Activated B cell treated with CpG ODN at 0.5 μM for 24 hours (primary cell): ENCODE measurements at regions of chr11 and their contacts with region 1.

Region 1: GRCh38 chr11:128323381-128323780 is 264.0 kb downstream of the ETS1 start:
- DNase-seq: no peak
- ATAC-seq: peak; percentile 25
- H3K4me3 Mint-ChIP-seq: no peak overlapping the region
- H3K27ac Mint-ChIP-seq: peak overlapping the region; percentile 59
- H3K4me1 Mint-ChIP-seq: peaks cover 49% of the 10 kb centered on the region
- H3K27me3 Mint-ChIP-seq: no peaks in the 10 kb centered on the region
- CTCF ChIP-seq: no peak

Region 2: GRCh38 chr11:128207861-128208321 is 115.5 kb before region 1 on chr11:
- CTCF ChIA-PET with region 1: no interaction called
- POLR2A ChIA-PET with region 1: no interaction called
- intact Hi-C with region 1: no loop called
- DNase-seq: no peak
- ATAC-seq: no peak
- H3K4me3 Mint-ChIP-seq: no peak overlapping the region
- H3K27ac Mint-ChIP-seq: no peak overlapping the region
- H3K4me1 Mint-ChIP-seq: no peaks in the 10 kb centered on the region
- H3K27me3 Mint-ChIP-seq: no peaks in the 10 kb centered on the region
- CTCF ChIP-seq: no peak

Region 3: GRCh38 chr11:128302425-128303186 is 20.8 kb before region 1 on chr11:
- CTCF ChIA-PET with region 1: interaction called, 4 read pairs
- POLR2A ChIA-PET with region 1: interaction called, 10 read pairs
- intact Hi-C with region 1: loop called (anchors 1 kb)
- DNase-seq: no peak
- ATAC-seq: peak; percentile 89
- H3K4me3 Mint-ChIP-seq: peak overlapping the region; percentile 21
- H3K27ac Mint-ChIP-seq: peak overlapping the region; percentile 81
- H3K4me1 Mint-ChIP-seq: peaks cover 73% of the 10 kb centered on the region
- H3K27me3 Mint-ChIP-seq: no peaks in the 10 kb centered on the region
- CTCF ChIP-seq: no peak

Region 4: GRCh38 chr11:128342511-128343134 is 19.2 kb after region 1 on chr11:
- CTCF ChIA-PET with region 1: interaction called, 5 read pairs
- POLR2A ChIA-PET with region 1: interaction called, 6 read pairs
- intact Hi-C with region 1: loop called (anchors 1 kb)
- DNase-seq: no peak
- ATAC-seq: peak; percentile 87
- H3K4me3 Mint-ChIP-seq: no peak overlapping the region
- H3K27ac Mint-ChIP-seq: peak overlapping the region; percentile 76
- H3K4me1 Mint-ChIP-seq: peaks cover 37% of the 10 kb centered on the region
- H3K27me3 Mint-ChIP-seq: no peaks in the 10 kb centered on the region
- CTCF ChIP-seq: no peak

Region 5: GRCh38 chr11:128399251-128400121 is 76.1 kb after region 1 on chr11:
- CTCF ChIA-PET with region 1: interaction called, 3 read pairs
- POLR2A ChIA-PET with region 1: no interaction called
- intact Hi-C with region 1: loop called (anchors 2 kb)
- DNase-seq: no peak
- ATAC-seq: peak; percentile 81
- H3K4me3 Mint-ChIP-seq: peak overlapping the region; percentile 40
- H3K27ac Mint-ChIP-seq: peak overlapping the region; percentile 91
- H3K4me1 Mint-ChIP-seq: peaks cover 29% of the 10 kb centered on the region
- H3K27me3 Mint-ChIP-seq: no peaks in the 10 kb centered on the region
- CTCF ChIP-seq: no peak

Region 6: GRCh38 chr11:128412847-128413791 is 89.7 kb after region 1 on chr11:
- CTCF ChIA-PET with region 1: interaction called, 4 read pairs
- POLR2A ChIA-PET with region 1: no interaction called
- intact Hi-C with region 1: loop called (anchors 5 kb)
- DNase-seq: no peak
- ATAC-seq: peak; percentile 73
- H3K4me3 Mint-ChIP-seq: peak overlapping the region; percentile 69
- H3K27ac Mint-ChIP-seq: peak overlapping the region; percentile 74
- H3K4me1 Mint-ChIP-seq: peaks cover 32% of the 10 kb centered on the region
- H3K27me3 Mint-ChIP-seq: no peaks in the 10 kb centered on the region
- CTCF ChIP-seq: no peak

Region 7: DNA sequence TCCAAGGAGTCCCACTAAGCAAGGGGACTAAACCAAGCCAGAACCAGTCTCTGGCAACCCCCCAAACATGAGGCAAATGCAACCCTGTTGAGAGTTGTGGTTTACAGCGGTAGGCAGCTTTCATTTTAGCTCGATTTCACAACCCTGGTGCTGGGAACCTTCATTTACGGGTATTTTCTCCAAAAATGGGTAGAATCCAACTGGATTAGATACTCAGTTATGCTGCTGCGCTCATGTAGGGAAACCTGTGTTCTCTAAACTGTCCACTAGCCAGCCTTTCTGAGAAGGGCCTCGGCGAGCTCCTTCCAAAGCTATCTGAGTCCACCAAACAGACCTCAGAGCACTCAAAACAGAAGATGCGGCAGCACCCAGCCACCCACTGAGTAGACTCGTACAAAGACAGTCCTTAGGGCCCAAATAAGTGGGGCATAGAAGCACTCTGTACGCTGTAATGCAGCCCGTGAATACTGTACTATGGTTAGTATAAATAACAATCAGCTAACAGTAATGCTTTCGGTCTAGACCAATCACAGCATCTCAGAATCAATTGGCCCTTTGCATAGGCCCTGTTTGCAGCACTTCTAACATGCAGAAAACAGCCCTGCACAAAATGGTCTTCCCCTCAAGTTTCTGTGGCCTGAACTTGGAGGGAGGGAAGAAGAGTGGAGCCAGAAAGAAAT is 159.3 kb after region 1 on chr11:
- CTCF ChIA-PET with region 1: interaction called, 3 read pairs
- POLR2A ChIA-PET with region 1: no interaction called
- intact Hi-C with region 1: loop called (anchors 1 kb)
- DNase-seq: no peak
- ATAC-seq: peak; percentile 18
- H3K4me3 Mint-ChIP-seq: peak overlapping the region; percentile 67
- H3K27ac Mint-ChIP-seq: peak overlapping the region; percentile 89
- H3K4me1 Mint-ChIP-seq: peaks cover 95% of the 10 kb centered on the region
- H3K27me3 Mint-ChIP-seq: no peaks in the 10 kb centered on the region
- CTCF ChIP-seq: no peak

Region 8: DNA sequence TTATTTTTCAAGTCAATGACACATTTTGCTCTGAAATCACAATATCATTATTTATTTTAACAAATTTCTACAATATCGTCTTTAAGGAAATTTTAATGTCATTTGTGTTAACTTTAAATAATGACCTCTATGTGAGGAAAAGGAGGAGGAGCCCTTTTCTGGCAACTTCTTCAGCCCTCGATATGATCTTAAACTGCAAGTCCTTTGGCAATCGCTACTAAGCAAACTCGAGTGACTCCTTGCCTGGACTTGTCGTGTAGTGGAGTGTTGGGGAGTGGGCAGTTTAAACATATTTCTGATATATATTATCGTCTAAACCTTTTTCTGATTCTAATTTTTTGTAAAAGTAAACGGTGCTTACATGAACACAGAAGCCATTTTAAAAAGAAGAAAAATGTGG is 247.3 kb after region 1 on chr11:
- CTCF ChIA-PET with region 1: no interaction called
- POLR2A ChIA-PET with region 1: no interaction called
- intact Hi-C with region 1: no loop called
- DNase-seq: no peak
- ATAC-seq: no peak
- H3K4me3 Mint-ChIP-seq: peak overlapping the region; percentile 52
- H3K27ac Mint-ChIP-seq: no peak overlapping the region
- H3K4me1 Mint-ChIP-seq: peaks cover 58% of the 10 kb centered on the region
- H3K27me3 Mint-ChIP-seq: no peaks in the 10 kb centered on the region
- CTCF ChIP-seq: no peak

Region 9: DNA sequence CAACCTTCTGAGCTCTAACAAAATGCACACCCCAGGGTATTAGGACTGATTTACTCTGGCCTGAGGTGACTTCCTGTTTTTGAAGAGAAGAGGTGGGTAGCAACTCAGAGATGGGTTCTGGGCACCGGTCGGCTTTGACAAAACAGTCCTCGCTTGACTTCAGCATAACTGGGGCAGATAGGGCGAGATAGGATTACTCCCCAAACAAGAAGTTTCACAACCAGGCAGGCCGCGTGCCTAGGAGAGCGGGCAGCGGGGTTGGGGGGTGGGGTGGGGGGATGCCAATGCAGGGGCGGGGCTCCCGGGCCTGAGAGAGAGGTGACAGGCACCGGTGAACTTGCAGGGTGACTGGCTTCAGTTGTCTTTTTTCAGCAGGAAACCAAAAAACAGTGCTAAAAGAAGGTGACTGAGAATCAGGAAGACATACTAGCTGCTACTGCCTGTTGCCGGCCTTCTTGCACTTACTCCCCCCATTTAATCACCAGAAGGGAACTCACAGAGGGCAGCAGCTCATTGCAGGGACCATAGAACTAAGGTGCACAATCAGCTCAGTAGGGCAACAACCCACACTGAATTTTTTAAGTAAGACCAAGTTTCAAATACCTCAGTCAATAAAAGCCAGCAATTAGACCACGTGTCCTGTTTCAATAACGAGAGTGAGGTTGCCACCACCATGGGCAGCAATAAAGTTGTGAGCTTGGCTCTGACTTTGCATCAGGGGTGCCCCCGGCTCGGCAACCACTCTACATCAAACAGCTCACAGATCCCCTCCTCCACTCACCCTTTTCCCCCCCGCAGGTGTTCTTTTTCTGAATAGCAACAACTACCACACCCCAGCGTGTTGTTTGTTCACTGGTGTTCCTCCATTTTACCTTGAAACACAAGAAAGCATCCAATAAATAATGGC is 301.1 kb after region 1 on chr11:
- CTCF ChIA-PET with region 1: interaction called, 39 read pairs
- POLR2A ChIA-PET with region 1: interaction called, 8 read pairs
- intact Hi-C with region 1: loop called (anchors 1 kb)
- DNase-seq: peak; percentile 64
- ATAC-seq: peak; percentile 82
- H3K4me3 Mint-ChIP-seq: peak overlapping the region; percentile 74
- H3K27ac Mint-ChIP-seq: peak overlapping the region; percentile 99
- H3K4me1 Mint-ChIP-seq: peaks cover 99% of the 10 kb centered on the region
- H3K27me3 Mint-ChIP-seq: no peaks in the 10 kb centered on the region
- CTCF ChIP-seq: no peak